Heart left ventricle (tissue), 16 donors: ENCODE measurements at regions of chr17 and their contacts with region 1.

Region 1: DNA sequence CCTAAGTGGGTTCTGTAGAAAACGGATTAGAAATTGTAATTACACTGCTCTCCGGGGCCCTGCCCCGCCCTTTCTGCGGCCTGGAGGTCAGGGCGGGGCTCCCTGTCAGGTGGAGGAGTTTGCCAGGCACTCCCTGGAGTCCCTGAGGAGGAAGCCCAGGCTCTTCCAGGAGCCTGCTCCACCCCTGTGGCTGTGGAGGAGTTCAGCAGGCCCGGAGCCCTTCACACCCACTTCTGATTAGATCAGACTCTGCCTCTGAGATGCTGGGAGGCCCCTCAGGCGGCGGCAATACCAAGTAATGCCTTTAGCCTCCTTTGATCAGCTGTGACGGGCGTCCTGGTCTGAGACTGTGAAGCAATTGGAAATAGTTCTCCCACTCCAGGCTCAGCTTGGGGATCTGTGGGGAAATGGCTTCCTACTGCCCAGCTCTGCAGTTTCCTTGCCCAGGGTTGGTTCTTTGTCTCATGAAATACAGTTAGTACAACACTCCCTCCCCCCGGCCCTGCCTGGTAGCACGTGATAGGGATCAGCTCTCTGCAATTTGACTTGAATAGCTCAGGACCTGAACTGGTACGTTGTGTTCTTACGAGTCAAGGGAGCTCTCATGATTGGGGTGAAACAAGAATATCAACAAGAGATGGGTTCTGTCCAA is 22.3 kb downstream of the BAIAP2 start:
- DNase-seq: peak in 3 of 5 donors; percentile 55 to 82 (median 61)
- ATAC-seq: peak; percentile 77 to 89 (median 86)
- H3K4me3 ChIP-seq: no peak overlapping the region
- H3K27ac ChIP-seq: peak overlapping the region; percentile 41 to 92 (median 72)
- H3K4me1 ChIP-seq: peaks cover 6 to 37% (median 26%) of the 10 kb centered on the region in 12 donors
- H3K27me3 ChIP-seq: no peaks in the 10 kb centered on the region
- CTCF ChIP-seq: no peak
- POLR2A ChIP-seq: no peak

Region 2: DNA sequence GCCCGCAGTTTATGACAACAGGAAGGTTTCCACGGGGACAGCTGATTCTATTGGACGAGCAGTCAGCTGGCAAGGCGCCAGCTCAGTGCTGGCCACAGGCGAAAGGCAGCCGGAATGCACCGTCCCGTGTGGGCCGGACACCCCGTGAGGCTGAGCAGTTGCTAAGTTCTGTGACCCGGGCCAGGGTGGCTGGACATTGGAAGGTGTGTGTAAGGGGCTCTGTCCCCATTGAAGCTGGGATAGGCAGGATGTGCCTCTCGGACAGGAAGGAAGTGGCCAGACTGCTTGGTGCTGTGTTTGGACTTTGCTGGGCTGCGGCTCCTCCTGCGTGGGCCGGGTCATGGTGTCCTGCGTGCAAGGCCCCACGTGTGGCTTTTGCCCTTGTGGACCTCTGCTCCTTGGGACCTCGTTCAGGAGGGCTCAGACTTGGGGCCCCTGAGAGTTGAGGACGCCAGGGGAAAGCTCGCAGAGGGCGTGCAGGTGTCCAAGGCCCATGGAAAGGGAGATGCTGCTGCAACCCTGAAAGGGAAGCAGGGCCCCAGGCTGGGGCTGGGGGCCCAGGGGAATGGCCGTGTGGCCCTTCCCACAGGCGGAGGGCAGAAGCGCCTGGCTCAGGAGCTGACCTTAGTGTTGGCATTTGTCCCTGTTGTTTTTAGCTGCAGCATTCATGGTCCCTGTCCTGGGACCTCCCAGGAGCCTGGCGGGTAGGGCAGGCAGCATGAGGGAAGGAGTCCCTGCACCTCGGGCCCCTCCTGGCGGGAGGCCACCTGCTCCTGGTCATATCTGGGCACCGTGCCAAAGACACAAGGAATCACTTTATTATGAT is 12.2 kb before region 1 on chr17:
- intact Hi-C with region 1: loop called in 1 of 10 experiments (anchors 1 kb)
- DNase-seq: peak; percentile 88 to 97 (median 92)
- ATAC-seq: peak; percentile 62 to 87 (median 81)
- H3K4me3 ChIP-seq: peak overlapping the region in 8 of 12 donors; percentile 8 to 32 (median 18)
- H3K27ac ChIP-seq: peak overlapping the region; percentile 58 to 86 (median 78)
- H3K4me1 ChIP-seq: peaks cover 14 to 85% (median 60%) of the 10 kb centered on the region in 12 donors
- H3K27me3 ChIP-seq: no peaks in the 10 kb centered on the region
- CTCF ChIP-seq: no peak
- POLR2A ChIP-seq: no peak